ENCODE measurements at regions of chr10 and their contacts with region 1.

Region 1: GRCh38 chr10:49407552-49408137 is 11.8 kb upstream of the DRGX start:
- DNase-seq: peak; percentile 84
- ATAC-seq: peak; percentile 77
- H3K4me3 Mint-ChIP-seq: no peak overlapping the region
- H3K27ac Mint-ChIP-seq: no peak overlapping the region
- H3K4me1 Mint-ChIP-seq: no peaks in the 10 kb centered on the region
- H3K27me3 Mint-ChIP-seq: peaks cover 37% of the 10 kb centered on the region
- CTCF ChIP-seq: peak; percentile 83

Region 2: GRCh38 chr10:49047128-49047639 is 360.5 kb before region 1 on chr10:
- CTCF ChIA-PET with region 1: no interaction called
- POLR2A ChIA-PET with region 1: no interaction called
- intact Hi-C with region 1: no loop called
- DNase-seq: no peak
- ATAC-seq: no peak
- H3K4me3 Mint-ChIP-seq: no peak overlapping the region
- H3K27ac Mint-ChIP-seq: no peak overlapping the region
- H3K4me1 Mint-ChIP-seq: no peaks in the 10 kb centered on the region
- H3K27me3 Mint-ChIP-seq: peaks cover 2% of the 10 kb centered on the region
- CTCF ChIP-seq: no peak

Region 3: DNA sequence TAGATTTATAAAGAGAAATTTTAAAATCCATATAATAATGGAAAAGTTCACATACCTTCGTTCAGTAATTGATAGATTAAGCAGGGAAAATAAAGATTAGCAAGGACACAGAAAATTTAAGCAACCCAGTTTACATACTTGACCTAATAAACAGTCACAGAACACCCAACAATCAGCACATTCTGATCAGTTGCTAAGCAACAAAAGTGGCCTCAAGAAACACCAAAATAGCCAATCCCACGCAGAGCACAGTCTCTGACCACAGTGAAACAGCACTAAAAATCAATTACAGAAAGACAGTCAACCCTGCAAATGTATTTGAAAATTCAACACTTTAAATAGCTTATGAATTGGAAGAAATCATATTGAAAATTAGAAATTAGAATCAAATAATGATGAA is 27.6 kb after region 1 on chr10:
- CTCF ChIA-PET with region 1: interaction called, 11 read pairs
- POLR2A ChIA-PET with region 1: no interaction called
- intact Hi-C with region 1: no loop called
- DNase-seq: no peak
- ATAC-seq: no peak
- H3K4me3 Mint-ChIP-seq: no peak overlapping the region
- H3K27ac Mint-ChIP-seq: no peak overlapping the region
- H3K4me1 Mint-ChIP-seq: no peaks in the 10 kb centered on the region
- H3K27me3 Mint-ChIP-seq: peaks cover 5% of the 10 kb centered on the region
- CTCF ChIP-seq: no peak

Region 4: GRCh38 chr10:49488056-49488717 is 80.5 kb after region 1 on chr10:
- CTCF ChIA-PET with region 1: interaction called, 13 read pairs
- POLR2A ChIA-PET with region 1: no interaction called
- intact Hi-C with region 1: no loop called
- DNase-seq: no peak
- ATAC-seq: no peak
- H3K4me3 Mint-ChIP-seq: no peak overlapping the region
- H3K27ac Mint-ChIP-seq: no peak overlapping the region
- H3K4me1 Mint-ChIP-seq: peaks cover 18% of the 10 kb centered on the region
- H3K27me3 Mint-ChIP-seq: no peaks in the 10 kb centered on the region
- CTCF ChIP-seq: no peak

Region 5: DNA sequence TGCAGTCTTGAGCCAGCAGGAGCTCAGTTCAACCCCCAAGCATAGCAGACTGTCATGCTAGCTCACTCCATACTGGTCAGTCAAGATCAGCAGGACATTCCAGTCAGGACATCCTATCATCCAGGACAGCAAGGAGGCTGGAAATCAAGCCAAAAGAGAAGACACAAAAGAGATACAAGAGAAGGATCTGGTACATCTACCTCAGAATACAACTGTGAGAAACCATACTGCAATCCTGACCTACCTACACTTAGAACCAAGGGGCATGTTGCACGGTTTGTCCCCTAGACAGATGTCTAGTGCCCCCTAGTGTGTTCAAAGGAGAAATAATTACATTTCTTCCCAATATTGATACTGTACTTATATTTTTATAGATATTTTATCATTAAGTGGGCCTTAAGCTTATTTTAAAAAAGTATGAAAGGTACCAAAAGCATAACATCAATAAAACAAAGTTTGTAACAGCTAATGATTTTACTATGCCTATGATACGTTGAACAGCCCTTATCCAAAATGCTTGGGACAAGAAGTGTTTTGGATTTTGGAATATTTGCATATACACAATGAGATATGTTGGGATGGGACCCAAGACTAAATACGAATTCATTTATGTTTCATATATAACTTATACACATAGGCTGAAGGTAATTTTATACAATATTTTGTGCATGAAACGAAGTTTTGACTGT is 104.6 kb after region 1 on chr10:
- CTCF ChIA-PET with region 1: interaction called, 155 read pairs
- POLR2A ChIA-PET with region 1: no interaction called
- intact Hi-C with region 1: loop called (anchors 2 kb)
- DNase-seq: peak; percentile 28
- ATAC-seq: peak; percentile 63
- H3K4me3 Mint-ChIP-seq: no peak overlapping the region
- H3K27ac Mint-ChIP-seq: no peak overlapping the region
- H3K4me1 Mint-ChIP-seq: peaks cover 21% of the 10 kb centered on the region
- H3K27me3 Mint-ChIP-seq: peaks cover 12% of the 10 kb centered on the region
- CTCF ChIP-seq: peak; percentile 86

Measured in activated CD8-positive, alpha-beta T cell treated with anti-CD3 and anti-CD28 coated beads for 36 hours (primary cell).